Common myeloid progenitor, CD34-positive (primary cell): ENCODE measurements at regions of chr1 and their contacts with region 1.

Region 1: GRCh38 chr1:148334339-148335130 is 148.6 kb downstream of the PPIAL4G start:
- DNase-seq: peak; percentile 95 to 98 (median 96)
- H3K4me3 ChIP-seq: peak overlapping the region; percentile 59 to 94 (median 83)
- H3K27ac ChIP-seq: peak overlapping the region; percentile 99
- H3K4me1 ChIP-seq: peaks cover 6 to 41% (median 32%) of the 10 kb centered on the region in 4 experiments
- H3K27me3 ChIP-seq: peaks cover 0 to 9% (median 0%) of the 10 kb centered on the region in 5 experiments

Region 2: DNA sequence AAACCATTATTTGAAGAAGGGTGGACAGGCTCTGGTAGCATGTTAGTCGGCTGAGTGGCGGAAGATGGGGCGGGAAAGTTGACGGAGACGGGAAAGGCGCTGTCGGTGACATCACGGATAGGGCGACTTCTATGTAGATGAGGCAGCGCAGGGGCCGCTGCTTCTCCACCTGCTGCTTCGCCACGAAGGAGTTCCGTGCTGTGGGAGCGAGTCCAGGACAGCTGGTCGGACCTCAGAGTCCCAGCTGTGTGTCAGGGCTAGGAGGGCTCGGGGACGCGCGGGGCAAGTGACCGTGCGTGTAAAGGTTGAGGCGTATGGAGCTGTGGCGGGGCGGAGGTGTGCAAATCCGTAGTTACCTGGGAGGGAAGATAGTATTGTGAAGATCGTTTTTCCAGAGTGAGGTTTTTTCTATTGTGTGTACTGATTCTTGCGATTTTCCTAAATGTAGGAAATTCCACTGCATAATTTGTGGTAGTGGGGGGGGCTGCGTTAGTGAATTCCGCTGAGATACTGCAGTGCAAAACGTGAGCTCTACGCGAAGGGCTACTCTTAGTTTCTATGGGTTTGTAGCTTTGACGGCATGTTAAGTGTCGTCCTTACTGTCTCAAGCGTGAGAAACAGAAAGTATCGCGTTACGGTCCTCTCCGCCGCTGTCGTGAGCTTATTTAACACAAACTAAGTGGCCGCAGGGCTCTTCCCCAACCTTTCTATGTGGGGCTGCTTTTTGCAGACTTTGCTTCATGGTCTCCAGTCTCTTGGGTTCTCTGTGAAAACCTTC is 71.2 kb before region 1 on chr1:
- CTCF ChIA-PET with region 1: interaction called, 3 read pairs
- POLR2A ChIA-PET with region 1: interaction called, 17 read pairs
- DNase-seq: peak; percentile 91 to 95 (median 91)
- H3K4me3 ChIP-seq: peak overlapping the region; percentile 49 to 88 (median 68)
- H3K27ac ChIP-seq: peak overlapping the region; percentile 79 to 91
- H3K4me1 ChIP-seq: peaks cover 0 to 14% (median 8%) of the 10 kb centered on the region in 4 experiments
- H3K27me3 ChIP-seq: peaks cover 0 to 12% (median 0%) of the 10 kb centered on the region in 5 experiments

Region 3: GRCh38 chr1:148290881-148291280 is 43.7 kb before region 1 on chr1:
- CTCF ChIA-PET with region 1: no interaction called
- POLR2A ChIA-PET with region 1: no interaction called
- DNase-seq: no peak
- H3K4me3 ChIP-seq: no peak overlapping the region
- H3K27ac ChIP-seq: no peak overlapping the region
- H3K4me1 ChIP-seq: peaks cover 0 to 10% (median 8%) of the 10 kb centered on the region in 4 experiments
- H3K27me3 ChIP-seq: no peaks in the 10 kb centered on the region

Region 4: GRCh38 chr1:148318123-148318903 is 16.2 kb before region 1 on chr1:
- CTCF ChIA-PET with region 1: interaction called, 7 read pairs
- POLR2A ChIA-PET with region 1: interaction called, 19 read pairs
- DNase-seq: peak; percentile 87 to 96 (median 95)
- H3K4me3 ChIP-seq: peak overlapping the region; percentile 29 to 83 (median 74)
- H3K27ac ChIP-seq: peak overlapping the region in 1 of 2 experiments; percentile 63
- H3K4me1 ChIP-seq: peaks cover 6 to 24% (median 22%) of the 10 kb centered on the region in 4 experiments
- H3K27me3 ChIP-seq: peaks cover 0 to 11% (median 0%) of the 10 kb centered on the region in 5 experiments

Region 5: GRCh38 chr1:148379170-148379500 is 44.6 kb after region 1 on chr1:
- CTCF ChIA-PET with region 1: no interaction called
- POLR2A ChIA-PET with region 1: no interaction called
- DNase-seq: no peak
- H3K4me3 ChIP-seq: peak overlapping the region in 3 of 7 experiments; percentile 52 to 67 (median 54)
- H3K27ac ChIP-seq: no peak overlapping the region
- H3K4me1 ChIP-seq: peaks cover 0 to 25% (median 14%) of the 10 kb centered on the region in 4 experiments
- H3K27me3 ChIP-seq: no peaks in the 10 kb centered on the region